Heart left ventricle (tissue), 16 donors: ENCODE measurements at regions of chr4 and their contacts with region 1.

Region 1: DNA sequence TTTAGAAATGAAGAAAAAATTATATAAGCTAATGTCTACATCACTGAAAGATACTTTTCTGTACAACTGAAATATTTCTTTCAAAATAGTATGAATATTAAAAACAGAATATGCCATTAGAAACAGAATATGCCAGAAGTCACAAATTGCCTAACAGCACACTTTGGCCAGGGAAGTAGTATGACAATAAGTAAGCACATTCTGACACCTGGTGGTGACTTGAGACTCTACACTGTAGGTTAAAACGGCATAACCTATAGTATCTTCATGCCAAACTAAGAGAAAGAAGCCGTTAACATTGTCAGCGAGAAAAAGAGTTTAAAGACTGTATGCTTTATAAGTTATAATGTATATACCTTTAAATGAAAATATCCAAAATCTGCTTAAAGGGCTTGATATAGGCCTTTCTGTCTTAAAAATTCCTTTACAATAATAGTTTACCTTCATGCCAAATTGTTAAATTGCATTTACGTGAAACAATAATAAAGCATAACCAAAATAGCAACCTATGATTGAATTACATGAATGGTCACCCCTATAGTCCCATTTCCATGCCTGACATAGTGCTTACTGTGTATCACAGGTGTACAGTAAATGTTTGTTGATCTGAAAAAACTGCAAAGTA is 32.8 kb downstream of the FAM13A start:
- DNase-seq: peak in 3 of 5 donors; percentile 42 to 62 (median 44)
- ATAC-seq: peak; percentile 92 to 96 (median 96)
- H3K4me3 ChIP-seq: no peak overlapping the region
- H3K27ac ChIP-seq: no peak overlapping the region
- H3K4me1 ChIP-seq: peaks cover 0 to 20% (median 4%) of the 10 kb centered on the region in 12 donors
- H3K27me3 ChIP-seq: no peaks in the 10 kb centered on the region
- CTCF ChIP-seq: peak; percentile 71 to 94 (median 84)
- POLR2A ChIP-seq: no peak

Region 2: DNA sequence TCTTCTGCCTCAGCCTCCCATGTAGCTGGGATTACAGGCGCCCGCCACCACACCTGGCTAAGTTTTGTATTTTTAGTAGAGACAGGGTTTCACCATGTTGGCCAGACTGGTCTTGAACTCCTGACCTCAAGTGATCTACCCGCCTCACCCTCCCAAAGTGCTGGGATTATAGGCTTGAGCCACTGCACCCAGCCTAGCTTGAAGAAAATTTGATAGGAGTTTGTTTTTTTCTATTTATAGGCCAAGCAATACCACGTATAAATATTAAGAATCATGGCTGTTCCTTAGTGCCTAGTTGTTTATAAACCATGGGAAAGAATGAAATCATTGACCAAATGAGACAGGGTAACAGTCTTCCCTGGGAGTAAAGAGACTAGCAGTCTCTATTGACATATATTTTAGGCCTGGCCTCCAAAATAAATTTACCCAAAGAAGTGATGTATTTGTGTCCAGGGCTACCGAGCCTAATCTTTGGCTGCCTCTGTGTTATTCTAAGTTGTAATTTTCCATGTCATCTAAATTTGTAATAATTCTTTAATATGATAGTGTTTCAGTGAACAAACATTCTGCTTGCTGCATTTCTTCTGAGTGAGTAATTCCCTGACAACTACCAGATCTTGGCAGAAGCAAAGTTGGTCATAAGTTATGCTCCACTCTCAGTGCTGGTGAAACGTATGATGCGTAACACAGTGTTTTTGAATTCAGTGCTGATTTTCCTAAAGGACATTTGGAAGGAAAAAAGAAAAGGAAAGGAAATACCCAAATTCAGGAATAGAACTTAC is 1006.5 kb before region 1 on chr4:
- intact Hi-C with region 1: no loop called
- DNase-seq: peak in 1 of 5 donors; percentile 34
- ATAC-seq: peak; percentile 85 to 94 (median 90)
- H3K4me3 ChIP-seq: peak overlapping the region in 1 of 12 donors; percentile 24
- H3K27ac ChIP-seq: peak overlapping the region; percentile 52 to 90 (median 84)
- H3K4me1 ChIP-seq: peaks cover 3 to 64% (median 39%) of the 10 kb centered on the region in 12 donors
- H3K27me3 ChIP-seq: no peaks in the 10 kb centered on the region
- CTCF ChIP-seq: no peak
- POLR2A ChIP-seq: no peak

Region 3: DNA sequence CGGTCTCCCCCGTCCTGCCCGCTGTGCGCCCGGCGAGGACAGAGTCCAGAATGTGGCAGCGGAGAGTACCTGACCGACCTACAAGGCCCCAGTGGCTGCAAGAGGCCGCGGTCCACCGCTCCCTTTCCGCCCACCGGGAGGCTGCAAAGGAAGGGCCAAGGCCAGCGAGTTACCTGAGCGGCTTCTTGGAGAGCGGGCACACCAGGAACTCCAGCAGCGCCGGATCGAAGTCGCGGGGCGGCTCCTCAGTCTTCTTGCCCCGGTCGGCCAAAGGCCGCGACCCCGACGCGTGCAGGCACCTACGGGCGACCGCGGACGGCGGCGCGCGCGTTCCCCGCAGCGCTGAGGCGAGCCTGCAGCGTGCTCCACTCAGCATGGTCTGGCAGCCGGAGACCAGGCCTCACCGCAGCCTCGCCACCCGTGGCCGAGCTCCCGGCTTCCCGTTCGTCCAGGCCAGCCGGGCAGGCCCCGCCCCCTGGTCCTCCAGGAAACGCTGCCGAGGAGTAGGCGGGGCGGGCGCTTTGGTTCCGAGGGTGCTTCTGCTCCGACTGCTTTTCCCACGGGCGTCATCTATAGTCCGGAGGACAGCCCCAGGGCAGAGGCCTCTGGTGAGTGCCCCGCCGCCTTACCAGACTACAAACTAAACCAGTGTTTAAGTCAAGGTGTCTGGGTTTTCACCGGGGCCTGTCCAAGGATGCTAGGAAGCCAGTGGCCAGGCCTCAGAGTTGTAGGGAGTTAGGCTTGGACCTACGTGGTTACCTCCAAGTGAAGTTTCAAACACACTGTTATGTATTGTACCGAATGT is 500.6 kb before region 1 on chr4 and contains the start of gene PYURF:
- intact Hi-C with region 1: loop called in 5 of 10 experiments (anchors 5 to 10 kb)
- DNase-seq: peak; percentile 94 to 98 (median 97)
- ATAC-seq: peak; percentile 96 to 98 (median 98)
- H3K4me3 ChIP-seq: peak within 1 kb of the TSS; percentile 66 to 96 (median 90)
- H3K27ac ChIP-seq: peak within 1 kb of the TSS; percentile 60 to 94 (median 86)
- H3K4me1 ChIP-seq: peaks cover 0 to 45% (median 19%) of the 10 kb centered on the region in 12 donors
- H3K27me3 ChIP-seq: no peaks in the 10 kb centered on the region
- CTCF ChIP-seq: peak in 1 of 12 donors; percentile 5
- POLR2A ChIP-seq: peak; percentile 4 to 87
- total RNA-seq, gene PYURF: 46.3 to 63.6 (median 54.2) TPM

Region 4: GRCh38 chr4:88533937-88534750 is 490.0 kb before region 1 on chr4:
- intact Hi-C with region 1: loop called in 8 of 10 experiments (anchors 5 to 10 kb)
- DNase-seq: no peak
- ATAC-seq: no peak
- H3K4me3 ChIP-seq: no peak overlapping the region
- H3K27ac ChIP-seq: peak overlapping the region in 1 of 12 donors; percentile 18
- H3K4me1 ChIP-seq: peaks cover 0 to 9% (median 0%) of the 10 kb centered on the region in 12 donors
- H3K27me3 ChIP-seq: no peaks in the 10 kb centered on the region
- CTCF ChIP-seq: no peak
- POLR2A ChIP-seq: no peak

Region 5: GRCh38 chr4:88549815-88550214 is 474.3 kb before region 1 on chr4:
- intact Hi-C with region 1: loop called in 1 of 10 experiments (anchors 10 kb)
- DNase-seq: no peak
- ATAC-seq: no peak
- H3K4me3 ChIP-seq: no peak overlapping the region
- H3K27ac ChIP-seq: no peak overlapping the region
- H3K4me1 ChIP-seq: no peaks in the 10 kb centered on the region
- H3K27me3 ChIP-seq: no peaks in the 10 kb centered on the region
- CTCF ChIP-seq: no peak
- POLR2A ChIP-seq: no peak

Region 6: DNA sequence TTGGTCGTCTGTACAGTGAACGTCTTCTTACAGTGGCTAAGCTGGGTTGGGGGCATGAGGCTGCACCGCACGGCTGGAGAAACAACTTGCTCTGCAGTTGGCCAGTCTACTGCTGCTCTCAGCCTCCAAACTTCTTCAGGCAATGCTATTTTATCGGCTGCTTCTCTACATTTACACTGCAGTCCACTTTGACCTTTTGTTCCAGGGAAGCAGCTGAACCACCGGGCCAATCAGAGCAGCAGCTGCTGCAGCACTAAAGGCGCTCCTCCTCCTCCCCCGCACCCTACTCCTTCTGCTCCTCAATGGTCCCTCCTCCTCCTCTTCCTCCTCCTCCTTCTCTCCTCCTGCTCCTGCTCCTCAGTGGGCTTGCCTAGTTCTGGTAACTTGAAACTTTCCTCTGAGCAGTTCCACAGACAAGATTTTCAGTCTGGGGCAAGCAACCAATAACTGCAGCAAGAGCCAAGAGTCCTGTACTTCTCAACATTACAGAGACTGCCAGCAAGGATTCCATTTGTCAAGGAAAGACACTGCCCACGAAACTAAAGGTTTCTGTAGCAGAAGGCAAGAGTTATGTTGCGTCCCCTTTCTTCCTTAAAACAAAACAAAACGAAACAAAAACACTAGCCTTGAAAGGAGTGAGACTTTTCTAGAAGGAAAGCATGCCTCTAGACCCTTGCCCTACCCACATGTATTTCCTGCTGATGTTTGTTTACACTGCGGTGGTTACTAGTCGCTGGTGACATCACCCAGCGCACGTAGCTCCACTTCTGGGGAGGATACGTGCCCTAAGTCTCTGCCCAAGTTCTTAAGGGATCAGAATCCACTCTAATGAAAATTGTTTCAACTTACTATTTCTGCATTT is 200.9 kb before region 1 on chr4:
- intact Hi-C with region 1: loop called (anchors 1 to 2 kb)
- DNase-seq: peak; percentile 89 to 93 (median 89)
- ATAC-seq: peak; percentile 93 to 99 (median 97)
- H3K4me3 ChIP-seq: peak overlapping the region; percentile 39 to 83 (median 62)
- H3K27ac ChIP-seq: peak overlapping the region; percentile 73 to 93 (median 86)
- H3K4me1 ChIP-seq: peaks cover 0 to 51% (median 26%) of the 10 kb centered on the region in 12 donors
- H3K27me3 ChIP-seq: no peaks in the 10 kb centered on the region
- CTCF ChIP-seq: no peak
- POLR2A ChIP-seq: peak in 1 of 2 donors; percentile 63

Region 7: DNA sequence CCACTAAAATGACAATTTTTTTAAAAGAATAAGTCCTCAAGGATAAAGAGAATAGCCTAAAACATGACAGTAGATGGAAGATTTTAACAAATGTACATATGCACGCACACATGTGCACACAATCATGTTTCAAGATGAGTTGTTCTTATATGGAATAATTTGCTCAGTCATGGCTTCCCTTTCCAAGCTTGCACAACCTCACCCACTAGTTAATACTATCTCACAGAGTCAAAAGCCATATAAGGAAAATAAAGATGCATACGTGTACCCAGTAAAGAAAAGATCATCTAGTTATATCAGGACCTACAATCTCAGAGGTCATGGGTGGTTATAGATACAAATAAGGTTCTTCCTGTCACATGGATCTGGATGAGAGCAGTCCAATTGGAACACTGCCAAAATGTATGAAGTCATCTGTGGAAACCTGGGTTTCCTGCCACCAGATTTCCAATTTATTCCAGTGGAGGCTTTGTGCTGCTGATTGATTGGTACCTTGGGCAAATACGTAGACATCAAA is 23.3 kb before region 1 on chr4:
- intact Hi-C with region 1: no loop called
- DNase-seq: no peak
- ATAC-seq: peak in 3 of 4 donors; percentile 31 to 59 (median 58)
- H3K4me3 ChIP-seq: no peak overlapping the region
- H3K27ac ChIP-seq: no peak overlapping the region
- H3K4me1 ChIP-seq: peaks cover 0 to 20% (median 13%) of the 10 kb centered on the region in 12 donors
- H3K27me3 ChIP-seq: no peaks in the 10 kb centered on the region
- CTCF ChIP-seq: no peak
- POLR2A ChIP-seq: no peak

Region 8: DNA sequence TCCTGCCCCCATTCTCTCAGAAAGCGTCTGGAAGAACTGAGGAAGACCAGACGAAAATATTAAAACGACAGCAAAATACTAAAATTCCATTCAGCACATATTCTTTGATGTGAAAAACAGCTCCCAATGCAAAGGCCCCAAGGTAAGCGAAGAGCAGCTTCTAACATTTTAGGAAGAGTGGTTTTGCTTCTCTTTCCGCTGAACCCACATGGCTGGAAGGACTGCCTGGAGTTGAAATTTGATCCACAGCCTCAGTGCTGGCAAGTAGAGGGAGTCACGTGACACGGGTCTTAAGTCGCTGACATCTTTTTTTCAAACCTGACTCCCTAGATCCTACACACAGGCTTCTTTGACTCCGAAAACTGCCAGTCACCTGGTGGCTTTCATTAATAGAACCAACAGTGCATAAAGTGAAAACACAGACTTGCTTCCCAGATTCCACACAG is 32.8 kb after region 1 on chr4 and contains the start of gene FAM13A:
- intact Hi-C with region 1: no loop called
- DNase-seq: peak; percentile 63 to 85 (median 77)
- ATAC-seq: peak; percentile 94 to 98 (median 95)
- H3K4me3 ChIP-seq: peak within 1 kb of the TSS; percentile 18 to 61 (median 48)
- H3K27ac ChIP-seq: peak within 1 kb of the TSS in 11 of 12 donors; percentile 1 to 73 (median 38)
- H3K4me1 ChIP-seq: peaks cover 0 to 22% (median 4%) of the 10 kb centered on the region in 12 donors
- H3K27me3 ChIP-seq: no peaks in the 10 kb centered on the region
- CTCF ChIP-seq: no peak
- POLR2A ChIP-seq: peak in 1 of 2 donors; percentile 18
- total RNA-seq, gene FAM13A: 7.0 to 30.4 (median 11.7) TPM